GM10248 (cell line): ENCODE measurements at regions of chr2 and their contacts with region 1.

Region 1: DNA sequence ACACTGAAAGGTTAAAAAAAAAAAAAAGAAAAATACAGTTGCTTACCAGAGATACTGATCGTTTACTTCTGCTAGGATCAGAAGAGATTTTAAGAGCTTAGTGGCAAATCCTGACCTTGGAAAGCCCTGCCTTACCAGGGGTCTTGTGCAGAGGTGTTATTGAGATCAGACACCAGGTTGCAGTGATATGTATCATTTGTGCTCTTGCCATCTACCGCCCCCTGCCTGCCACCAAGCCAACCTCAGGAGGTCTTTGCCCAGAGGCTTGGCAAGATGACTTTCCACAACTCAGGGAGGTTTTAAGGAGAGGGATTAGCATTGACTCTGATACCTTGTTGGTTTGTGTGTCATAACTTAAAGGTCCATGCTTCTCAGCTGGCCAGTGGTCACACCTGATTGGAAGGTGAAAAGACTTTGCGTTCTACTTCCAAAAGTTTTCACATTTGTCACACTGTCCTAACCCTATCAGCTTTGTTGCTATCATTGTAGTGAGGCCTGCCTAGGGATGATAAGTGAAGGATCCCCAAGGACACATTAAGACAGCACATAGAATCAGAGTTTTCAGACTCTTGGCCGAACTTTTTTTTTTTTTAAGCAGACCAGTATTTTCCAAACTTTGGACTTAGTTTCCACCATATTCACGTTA is 46.2 kb upstream of the MGAT5 start:
- DNase-seq: peak; percentile 44
- CTCF ChIP-seq: peak; percentile 73

Region 2: DNA sequence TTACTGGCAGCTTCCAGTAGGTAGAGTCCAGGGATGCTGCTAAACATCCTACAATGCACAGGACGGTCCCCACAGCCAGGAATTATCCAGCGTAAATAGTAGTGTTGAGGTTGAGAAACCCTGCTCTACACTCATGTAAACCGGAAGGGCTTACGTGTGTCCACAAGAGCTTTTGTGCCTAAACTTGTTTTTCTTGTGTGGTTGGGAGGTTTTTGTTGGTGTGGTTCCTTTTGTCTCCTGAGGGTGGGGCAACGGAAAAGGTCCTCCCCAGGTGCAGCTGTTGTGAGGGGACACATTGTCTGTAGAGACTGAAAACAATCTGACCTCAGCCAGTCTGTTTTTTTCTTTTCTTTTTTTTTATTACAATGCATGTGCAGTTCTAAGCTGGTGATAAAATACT is 26.5 kb before region 1 on chr2:
- CTCF ChIA-PET with region 1: interaction called, 11 read pairs
- POLR2A ChIA-PET with region 1: no interaction called
- DNase-seq: no peak
- CTCF ChIP-seq: no peak

Region 3: GRCh38 chr2:134218930-134219658 is 11.4 kb after region 1 on chr2:
- CTCF ChIA-PET with region 1: interaction called, 122 read pairs
- POLR2A ChIA-PET with region 1: no interaction called
- DNase-seq: no peak
- CTCF ChIP-seq: no peak

Region 4: GRCh38 chr2:134227666-134228065 is 20.0 kb after region 1 on chr2:
- CTCF ChIA-PET with region 1: interaction called, 30 read pairs
- POLR2A ChIA-PET with region 1: no interaction called
- DNase-seq: no peak
- CTCF ChIP-seq: no peak

Region 5: GRCh38 chr2:134232868-134233727 is 25.4 kb after region 1 on chr2:
- CTCF ChIA-PET with region 1: interaction called, 14 read pairs
- POLR2A ChIA-PET with region 1: no interaction called
- DNase-seq: no peak
- CTCF ChIP-seq: no peak